Ascending aorta (tissue), 2 donors: ENCODE measurements at regions of chr20 and their contacts with region 1.

Region 1: DNA sequence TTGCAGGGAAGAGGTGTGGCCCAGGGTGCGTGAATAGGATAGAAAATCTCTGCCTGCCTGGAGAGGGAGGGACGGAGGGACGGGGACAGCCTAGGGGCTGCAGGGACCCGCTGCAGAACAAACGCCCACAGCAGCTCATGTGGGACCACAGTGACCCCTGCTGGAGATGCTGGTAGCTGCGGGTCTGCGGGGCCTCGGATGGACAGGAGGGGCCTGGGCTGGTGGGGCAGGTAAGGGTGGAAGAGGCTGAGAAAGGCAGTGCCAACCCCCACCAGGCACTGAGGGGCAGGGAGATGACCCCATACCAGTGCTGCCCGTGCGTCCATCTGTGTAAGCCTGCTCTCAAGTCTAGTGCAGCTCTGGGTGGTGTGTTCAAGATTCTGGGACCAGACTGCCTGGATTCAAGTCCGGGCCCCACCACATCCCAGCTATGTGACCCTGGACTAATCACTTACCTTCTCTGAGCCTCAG is 39.4 kb downstream of the KIAA1755 start:
- DNase-seq: peak in 1 of 2 donors; percentile 82
- H3K4me3 ChIP-seq: no peak overlapping the region
- H3K27ac ChIP-seq: no peak overlapping the region
- H3K4me1 ChIP-seq: peaks cover 0 to 8% of the 10 kb centered on the region in 2 donors
- H3K27me3 ChIP-seq: no peaks in the 10 kb centered on the region
- CTCF ChIP-seq: peak; percentile 86 to 94 (median 89)

Region 2: GRCh38 chr20:37943501-37944455 is 277.4 kb before region 1 on chr20:
- intact Hi-C with region 1: no loop called
- DNase-seq: no peak
- H3K4me3 ChIP-seq: no peak overlapping the region
- H3K27ac ChIP-seq: no peak overlapping the region
- H3K4me1 ChIP-seq: no peaks in the 10 kb centered on the region
- H3K27me3 ChIP-seq: no peaks in the 10 kb centered on the region
- CTCF ChIP-seq: no peak

Region 3: GRCh38 chr20:38173237-38174156 is 47.7 kb before region 1 on chr20:
- intact Hi-C with region 1: loop called (anchors 2 kb)
- DNase-seq: peak in 1 of 2 donors; percentile 91
- H3K4me3 ChIP-seq: no peak overlapping the region
- H3K27ac ChIP-seq: peak overlapping the region in 1 of 2 donors; percentile 26
- H3K4me1 ChIP-seq: peaks cover 9 to 12% of the 10 kb centered on the region in 2 donors
- H3K27me3 ChIP-seq: no peaks in the 10 kb centered on the region
- CTCF ChIP-seq: no peak

Region 4: GRCh38 chr20:38369389-38369788 is 148.2 kb after region 1 on chr20:
- intact Hi-C with region 1: no loop called
- DNase-seq: no peak
- H3K4me3 ChIP-seq: no peak overlapping the region
- H3K27ac ChIP-seq: no peak overlapping the region
- H3K4me1 ChIP-seq: no peaks in the 10 kb centered on the region
- H3K27me3 ChIP-seq: no peaks in the 10 kb centered on the region
- CTCF ChIP-seq: no peak